Activated CD8-positive, alpha-beta T cell treated with anti-CD3 and anti-CD28 coated beads for 36 hours (primary cell): ENCODE measurements at regions of chr16 and their contacts with region 1.

Region 1: GRCh38 chr16:81403616-81404373 is 40.8 kb upstream of the CMIP start:
- DNase-seq: peak; percentile 89
- ATAC-seq: peak; percentile 91
- H3K4me3 Mint-ChIP-seq: no peak overlapping the region
- H3K27ac Mint-ChIP-seq: no peak overlapping the region
- H3K4me1 Mint-ChIP-seq: no peaks in the 10 kb centered on the region
- H3K27me3 Mint-ChIP-seq: peaks cover 3% of the 10 kb centered on the region
- CTCF ChIP-seq: peak; percentile 88

Region 2: DNA sequence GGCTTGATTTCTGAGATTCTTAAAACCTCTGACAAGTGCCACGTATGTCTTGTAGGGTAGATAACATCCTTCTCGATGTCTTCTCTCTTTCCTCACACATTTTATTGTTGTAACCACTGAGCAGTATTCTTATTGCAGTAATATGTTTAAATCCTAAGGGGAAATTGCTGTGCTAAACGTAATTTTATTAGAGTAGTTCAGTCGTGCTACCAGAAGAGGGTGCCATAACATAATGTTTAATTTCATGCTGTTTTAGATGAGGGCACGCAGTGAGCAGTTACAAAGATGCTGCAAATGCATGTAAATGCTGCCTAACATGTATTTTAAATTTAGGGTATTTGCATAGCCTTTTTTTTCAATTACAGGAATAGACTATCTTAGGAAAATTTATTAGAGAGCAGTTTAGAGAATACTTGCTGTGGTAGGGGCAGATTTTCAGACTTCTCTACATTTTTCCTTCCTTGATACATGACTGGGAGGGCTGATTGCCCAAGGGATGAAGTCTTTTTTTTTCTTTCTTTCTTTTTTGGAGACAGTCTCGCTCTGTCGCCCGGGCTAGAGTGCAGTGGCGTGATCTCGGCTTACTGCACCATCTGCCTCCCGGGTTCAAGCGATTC is 37.4 kb before region 1 on chr16:
- CTCF ChIA-PET with region 1: interaction called, 18 read pairs
- POLR2A ChIA-PET with region 1: no interaction called
- intact Hi-C with region 1: no loop called
- DNase-seq: peak; percentile 10
- ATAC-seq: peak; percentile 67
- H3K4me3 Mint-ChIP-seq: no peak overlapping the region
- H3K27ac Mint-ChIP-seq: no peak overlapping the region
- H3K4me1 Mint-ChIP-seq: no peaks in the 10 kb centered on the region
- H3K27me3 Mint-ChIP-seq: no peaks in the 10 kb centered on the region
- CTCF ChIP-seq: peak; percentile 80

Region 3: DNA sequence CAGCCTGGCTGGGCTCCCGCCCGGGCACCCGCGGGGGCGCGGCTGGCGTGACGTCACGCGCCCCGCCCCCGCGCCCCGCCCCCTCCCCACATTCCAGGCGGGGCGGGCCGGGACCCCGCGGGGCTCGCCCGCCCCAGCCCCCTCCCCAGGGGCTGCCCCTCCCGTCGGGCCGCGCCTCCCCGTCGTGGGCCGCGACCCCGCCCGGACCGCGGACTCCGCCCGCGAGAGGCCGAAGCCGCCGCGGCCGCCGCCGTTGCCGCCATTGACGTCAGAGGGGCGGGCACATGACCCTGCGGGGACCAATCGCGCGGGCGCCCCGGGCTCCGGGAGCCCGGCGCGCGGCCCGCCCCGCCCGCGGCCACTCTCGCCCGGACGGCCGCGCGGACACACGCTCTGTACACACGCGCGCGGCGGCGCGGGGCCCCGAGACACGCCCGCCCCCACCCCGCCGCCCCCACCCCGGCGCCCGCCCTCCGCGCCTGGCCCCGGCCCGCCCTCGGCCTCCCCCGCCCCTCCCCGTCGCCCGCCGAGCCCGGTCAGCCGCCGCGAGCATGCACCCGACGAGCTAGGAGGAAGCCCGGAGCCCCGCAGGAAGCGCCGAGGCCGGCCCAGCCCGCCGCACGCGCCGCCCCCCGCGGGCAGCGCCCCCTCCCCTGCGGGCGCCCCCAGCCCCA is 40.8 kb after region 1 on chr16 and contains the start of gene CMIP:
- CTCF ChIA-PET with region 1: no interaction called
- POLR2A ChIA-PET with region 1: no interaction called
- intact Hi-C with region 1: no loop called
- DNase-seq: peak; percentile 81
- ATAC-seq: peak; percentile 75
- H3K4me3 Mint-ChIP-seq: peak within 1 kb of the TSS; percentile 87
- H3K27ac Mint-ChIP-seq: peak within 1 kb of the TSS; percentile 88
- H3K4me1 Mint-ChIP-seq: peaks cover 44% of the 10 kb centered on the region
- H3K27me3 Mint-ChIP-seq: peaks cover 2% of the 10 kb centered on the region
- CTCF ChIP-seq: no peak
- total RNA-seq, gene CMIP: 37.6 to 38.5 TPM

Region 4: DNA sequence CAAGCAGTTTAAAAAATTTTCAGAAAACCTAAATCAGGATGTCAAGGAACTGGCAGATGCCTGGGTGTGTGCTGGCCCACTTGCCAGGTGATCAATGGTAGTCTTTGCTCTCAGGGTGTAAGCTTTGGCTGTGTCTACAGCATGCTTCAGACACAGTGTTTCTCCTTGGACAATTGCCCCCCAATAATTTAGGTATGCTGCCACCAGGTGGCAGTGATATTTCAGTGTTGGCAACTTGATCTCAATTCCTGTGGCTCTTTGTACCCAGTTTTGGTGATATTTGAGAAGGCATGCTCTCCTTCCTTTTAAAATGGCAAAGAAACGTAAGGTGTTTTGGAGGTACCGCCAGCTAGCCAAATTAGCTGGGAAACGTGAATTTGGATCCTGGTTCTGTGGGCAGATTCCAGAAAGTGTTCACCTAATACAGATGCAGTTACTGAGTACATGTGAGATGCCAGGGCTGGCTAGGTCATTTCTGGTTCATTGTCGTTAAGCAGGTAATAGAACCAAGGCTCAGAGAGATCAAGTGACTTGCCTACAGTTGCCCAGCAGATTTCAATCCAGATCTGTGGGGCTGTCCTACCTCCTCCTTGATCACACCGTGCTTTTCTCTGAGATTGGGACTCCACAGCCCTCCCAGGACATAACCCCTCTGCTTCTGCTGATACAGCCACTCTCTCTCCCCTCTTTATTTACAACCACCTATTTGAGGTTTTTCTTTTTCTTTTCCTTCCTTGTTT is 219.7 kb after region 1 on chr16:
- CTCF ChIA-PET with region 1: interaction called, 3 read pairs
- POLR2A ChIA-PET with region 1: no interaction called
- intact Hi-C with region 1: loop called (anchors 5 kb)
- DNase-seq: peak; percentile 74
- ATAC-seq: no peak
- H3K4me3 Mint-ChIP-seq: no peak overlapping the region
- H3K27ac Mint-ChIP-seq: no peak overlapping the region
- H3K4me1 Mint-ChIP-seq: peaks cover 5% of the 10 kb centered on the region
- H3K27me3 Mint-ChIP-seq: no peaks in the 10 kb centered on the region
- CTCF ChIP-seq: peak; percentile 69

Region 5: GRCh38 chr16:81696961-81697615 is 293.3 kb after region 1 on chr16:
- CTCF ChIA-PET with region 1: interaction called, 24 read pairs
- POLR2A ChIA-PET with region 1: no interaction called
- intact Hi-C with region 1: no loop called
- DNase-seq: peak; percentile 64
- ATAC-seq: peak; percentile 74
- H3K4me3 Mint-ChIP-seq: no peak overlapping the region
- H3K27ac Mint-ChIP-seq: peak overlapping the region; percentile 3
- H3K4me1 Mint-ChIP-seq: no peaks in the 10 kb centered on the region
- H3K27me3 Mint-ChIP-seq: no peaks in the 10 kb centered on the region
- CTCF ChIP-seq: peak; percentile 56

Region 6: GRCh38 chr16:81723098-81723723 is 319.4 kb after region 1 on chr16:
- CTCF ChIA-PET with region 1: interaction called, 23 read pairs
- POLR2A ChIA-PET with region 1: no interaction called
- intact Hi-C with region 1: loop called (anchors 5 kb)
- DNase-seq: peak; percentile 47
- ATAC-seq: peak; percentile 75
- H3K4me3 Mint-ChIP-seq: no peak overlapping the region
- H3K27ac Mint-ChIP-seq: no peak overlapping the region
- H3K4me1 Mint-ChIP-seq: peaks cover 9% of the 10 kb centered on the region
- H3K27me3 Mint-ChIP-seq: no peaks in the 10 kb centered on the region
- CTCF ChIP-seq: peak; percentile 79

Region 7: DNA sequence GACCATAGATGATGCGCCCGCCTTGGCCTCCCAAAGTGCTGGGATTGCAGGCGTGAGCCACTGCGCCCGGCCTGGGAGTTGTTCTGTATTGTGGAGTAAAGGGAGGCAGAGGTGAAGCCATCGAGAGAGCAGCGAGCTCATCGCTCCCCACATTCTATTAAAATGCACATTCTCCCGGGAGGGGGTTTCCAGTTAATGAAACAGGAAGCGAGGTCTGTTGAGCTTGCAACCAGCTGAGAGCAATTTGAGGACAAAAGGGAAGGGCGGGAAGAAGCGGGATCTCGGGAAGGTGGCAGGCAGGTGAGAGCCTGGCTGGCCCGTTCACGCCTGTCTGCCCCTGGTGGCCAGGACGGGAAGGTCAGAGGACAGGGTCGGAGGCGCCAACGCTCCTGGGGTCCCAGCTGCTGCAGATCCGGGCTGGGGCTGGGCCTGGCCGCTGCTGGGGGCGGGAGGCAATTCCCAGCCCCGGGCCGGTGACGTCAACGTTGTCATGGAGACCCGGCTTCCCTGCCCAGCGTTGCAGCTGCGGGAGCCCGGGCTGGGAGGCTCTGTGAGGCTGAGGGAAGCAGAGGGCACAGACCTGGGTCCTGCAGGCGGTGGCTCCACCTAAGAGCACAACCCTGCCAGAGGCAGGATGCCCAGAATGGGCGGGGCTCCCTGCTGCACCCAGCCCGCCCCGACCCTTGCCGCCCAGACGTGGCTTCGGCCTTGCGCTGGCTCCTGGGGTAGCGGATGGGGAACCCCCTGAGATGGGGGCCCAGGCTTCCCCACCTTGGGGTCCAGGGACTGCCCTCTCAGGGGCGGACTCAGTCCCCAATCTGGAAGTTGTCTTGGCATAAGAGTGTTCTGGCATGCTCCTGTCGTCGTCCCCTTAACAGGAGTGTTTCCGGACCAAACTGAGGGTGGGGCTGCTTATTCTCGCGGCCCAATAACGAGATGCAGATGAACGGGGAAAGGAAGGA is 326.6 kb after region 1 on chr16:
- CTCF ChIA-PET with region 1: interaction called, 15 read pairs
- POLR2A ChIA-PET with region 1: interaction called, 3 read pairs
- intact Hi-C with region 1: no loop called
- DNase-seq: peak; percentile 67
- ATAC-seq: peak; percentile 93
- H3K4me3 Mint-ChIP-seq: peak overlapping the region; percentile 68
- H3K27ac Mint-ChIP-seq: peak overlapping the region; percentile 91
- H3K4me1 Mint-ChIP-seq: peaks cover 12% of the 10 kb centered on the region
- H3K27me3 Mint-ChIP-seq: no peaks in the 10 kb centered on the region
- CTCF ChIP-seq: peak; percentile 69

Region 8: DNA sequence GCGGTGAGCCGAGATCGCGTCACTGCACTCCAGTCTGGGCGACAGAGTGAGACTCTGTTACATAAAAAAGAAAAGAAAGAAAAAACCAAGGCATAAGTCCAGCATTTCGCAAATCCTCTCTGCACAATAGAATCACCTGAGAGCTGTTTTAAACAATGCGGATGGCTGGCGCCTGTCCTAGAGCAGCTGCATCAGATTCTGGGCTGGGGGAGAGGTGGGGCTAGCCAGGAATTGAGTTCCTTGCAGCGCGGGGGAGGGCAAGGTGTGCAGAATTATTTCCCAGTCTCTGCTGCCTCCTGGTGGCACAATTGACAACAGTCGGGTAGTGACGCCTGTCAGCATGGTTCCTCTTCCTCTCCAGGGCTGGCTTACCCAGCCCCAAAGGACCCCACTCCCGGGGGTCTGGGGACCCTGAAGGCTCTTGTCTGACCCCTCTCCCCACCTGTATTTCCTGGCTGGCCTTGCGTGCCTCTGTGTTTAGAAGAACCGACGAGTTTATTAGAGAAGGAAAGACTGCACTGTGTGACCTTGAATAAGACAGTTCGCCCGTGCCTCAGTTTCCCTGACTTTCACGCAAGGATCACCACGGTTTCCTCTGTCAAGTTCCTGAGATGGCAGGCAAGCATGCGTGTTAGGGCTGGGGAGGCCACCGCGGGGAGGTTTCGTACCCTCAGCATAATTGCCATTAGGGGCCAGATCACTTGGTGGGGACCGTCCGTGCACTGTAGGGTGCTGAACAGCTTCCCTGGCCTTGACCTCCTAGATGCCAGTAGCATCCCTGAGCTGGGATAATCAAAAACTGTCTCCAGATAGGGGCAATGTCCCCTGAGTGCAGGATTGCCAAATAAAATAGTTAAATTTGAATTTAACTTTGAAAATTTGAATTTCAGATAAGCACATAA is 334.3 kb after region 1 on chr16:
- CTCF ChIA-PET with region 1: interaction called, 12 read pairs
- POLR2A ChIA-PET with region 1: no interaction called
- intact Hi-C with region 1: no loop called
- DNase-seq: peak; percentile 90
- ATAC-seq: peak; percentile 97
- H3K4me3 Mint-ChIP-seq: peak overlapping the region; percentile 34
- H3K27ac Mint-ChIP-seq: no peak overlapping the region
- H3K4me1 Mint-ChIP-seq: peaks cover 6% of the 10 kb centered on the region
- H3K27me3 Mint-ChIP-seq: peaks cover 1% of the 10 kb centered on the region
- CTCF ChIP-seq: peak; percentile 90